CD8-positive, alpha-beta memory T cell (primary cell): ENCODE measurements at regions of chr20 and their contacts with region 1.

Region 1: DNA sequence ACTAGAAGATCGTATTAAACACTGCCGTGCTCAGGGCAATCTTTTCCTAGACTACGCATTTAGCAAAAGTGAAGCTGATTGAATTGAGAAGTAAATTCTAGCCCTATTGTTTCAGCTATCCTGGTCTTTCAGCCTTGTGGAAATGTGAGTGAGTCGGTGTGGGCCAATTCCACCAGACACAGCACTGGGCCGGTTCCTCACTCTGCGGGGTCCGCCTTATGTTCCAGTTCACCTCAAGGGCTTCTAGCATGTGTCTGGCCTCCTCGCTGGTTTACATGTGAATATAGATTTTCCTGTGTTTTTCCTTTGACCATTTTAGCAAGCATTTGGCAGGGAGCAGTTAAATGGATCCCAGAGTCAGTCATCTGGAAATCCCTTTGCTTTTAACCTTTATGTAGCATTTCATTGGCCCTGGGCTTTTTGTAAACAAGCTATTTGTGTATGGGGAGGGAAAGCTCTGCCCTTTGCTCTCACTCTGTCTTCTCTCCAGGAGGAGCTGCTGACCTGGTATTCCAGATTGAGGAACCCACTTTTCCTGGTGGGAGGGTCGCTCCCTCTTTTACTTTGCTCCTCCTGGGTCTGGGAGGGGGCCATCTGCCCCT is 12.4 kb upstream of the GTSF1L start:
- DNase-seq: no peak
- H3K4me3 ChIP-seq: no peak overlapping the region
- H3K4me3 Mint-ChIP-seq: no peak overlapping the region
- H3K27ac ChIP-seq: no peak overlapping the region
- H3K27ac Mint-ChIP-seq: peak overlapping the region in 1 of 8 donors; percentile 30
- H3K4me1 ChIP-seq: no peaks in the 10 kb centered on the region
- H3K4me1 Mint-ChIP-seq: peaks cover 0 to 7% (median 0%) of the 10 kb centered on the region in 3 donors
- H3K27me3 ChIP-seq: no peaks in the 10 kb centered on the region
- H3K27me3 Mint-ChIP-seq: peaks cover 2 to 10% of the 10 kb centered on the region in 2 donors

Region 2: DNA sequence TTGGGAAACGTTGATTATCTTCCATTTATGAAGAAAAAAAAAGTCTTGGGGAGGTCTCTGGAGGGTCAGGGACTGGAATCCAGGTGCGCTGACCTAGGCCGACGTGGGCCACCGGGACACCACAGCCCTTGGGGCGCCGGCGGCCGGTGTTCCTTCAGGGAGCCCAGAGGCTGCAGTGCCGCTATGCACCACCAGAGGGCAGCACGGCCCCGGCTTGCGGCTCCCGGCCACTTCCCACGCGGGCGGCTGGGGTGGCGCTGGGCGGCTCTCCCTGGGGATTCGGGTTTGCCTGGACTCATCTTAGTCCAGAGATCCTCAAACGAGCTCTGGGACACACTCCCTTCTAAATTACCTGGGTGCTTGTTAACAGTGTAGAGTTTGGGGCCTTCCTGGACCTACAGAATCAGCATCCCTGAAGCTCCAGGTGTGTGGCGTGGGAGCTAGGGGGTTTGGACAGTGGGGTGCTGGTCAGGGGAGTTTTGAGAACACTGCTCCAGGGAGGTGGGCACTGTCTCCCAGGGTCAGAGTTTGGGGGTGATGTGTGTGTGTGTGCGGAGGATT is 10.6 kb after region 1 on chr20:
- CTCF ChIA-PET with region 1: interaction called, 11 read pairs
- POLR2A ChIA-PET with region 1: no interaction called
- DNase-seq: peak; percentile 57 to 83 (median 73)
- H3K4me3 ChIP-seq: no peak overlapping the region
- H3K4me3 Mint-ChIP-seq: no peak overlapping the region
- H3K27ac ChIP-seq: no peak overlapping the region
- H3K27ac Mint-ChIP-seq: no peak overlapping the region
- H3K4me1 ChIP-seq: peaks cover 24% of the 10 kb centered on the region
- H3K4me1 Mint-ChIP-seq: peaks cover 22 to 36% (median 33%) of the 10 kb centered on the region in 3 donors
- H3K27me3 ChIP-seq: peaks cover 6% of the 10 kb centered on the region
- H3K27me3 Mint-ChIP-seq: peaks cover 5 to 45% of the 10 kb centered on the region in 2 donors